Right lobe of liver (tissue), 6 donors: ENCODE measurements at regions of chr22 and their contacts with region 1.

Region 1: DNA sequence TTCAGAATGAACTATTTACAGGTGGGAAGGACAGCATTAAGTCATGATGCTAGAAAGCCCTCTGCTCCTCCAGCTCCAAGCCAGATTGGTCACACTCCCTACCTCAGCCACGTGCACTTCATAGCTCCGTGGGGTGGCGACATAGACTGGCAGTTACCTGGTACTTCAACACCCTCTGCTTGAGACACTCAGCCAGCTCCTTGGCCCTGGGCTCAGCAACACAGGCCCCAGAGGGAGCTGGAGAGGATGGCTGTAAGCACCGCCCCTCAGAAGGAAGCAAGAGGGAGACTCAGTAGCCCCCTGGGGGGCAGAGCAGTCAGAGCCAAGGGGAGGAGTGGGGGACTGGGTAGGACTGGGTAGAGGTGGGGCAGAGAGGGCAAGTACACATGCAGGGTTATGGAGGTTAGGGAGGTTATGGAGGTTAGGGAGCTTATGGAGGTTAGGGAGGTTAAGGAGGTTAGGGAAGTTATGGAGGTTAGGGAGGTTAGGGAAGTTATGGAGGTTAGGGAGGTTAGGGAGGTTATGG is 102.1 kb upstream of the BID start:
- DNase-seq: no peak
- ATAC-seq: peak; percentile 32 to 41 (median 36)
- H3K4me3 ChIP-seq: no peak overlapping the region
- H3K27ac ChIP-seq: no peak overlapping the region
- H3K4me1 ChIP-seq: peaks cover 0 to 7% (median 0%) of the 10 kb centered on the region in 4 donors
- H3K27me3 ChIP-seq: no peaks in the 10 kb centered on the region
- CTCF ChIP-seq: no peak
- POLR2A ChIP-seq: no peak

Region 2: DNA sequence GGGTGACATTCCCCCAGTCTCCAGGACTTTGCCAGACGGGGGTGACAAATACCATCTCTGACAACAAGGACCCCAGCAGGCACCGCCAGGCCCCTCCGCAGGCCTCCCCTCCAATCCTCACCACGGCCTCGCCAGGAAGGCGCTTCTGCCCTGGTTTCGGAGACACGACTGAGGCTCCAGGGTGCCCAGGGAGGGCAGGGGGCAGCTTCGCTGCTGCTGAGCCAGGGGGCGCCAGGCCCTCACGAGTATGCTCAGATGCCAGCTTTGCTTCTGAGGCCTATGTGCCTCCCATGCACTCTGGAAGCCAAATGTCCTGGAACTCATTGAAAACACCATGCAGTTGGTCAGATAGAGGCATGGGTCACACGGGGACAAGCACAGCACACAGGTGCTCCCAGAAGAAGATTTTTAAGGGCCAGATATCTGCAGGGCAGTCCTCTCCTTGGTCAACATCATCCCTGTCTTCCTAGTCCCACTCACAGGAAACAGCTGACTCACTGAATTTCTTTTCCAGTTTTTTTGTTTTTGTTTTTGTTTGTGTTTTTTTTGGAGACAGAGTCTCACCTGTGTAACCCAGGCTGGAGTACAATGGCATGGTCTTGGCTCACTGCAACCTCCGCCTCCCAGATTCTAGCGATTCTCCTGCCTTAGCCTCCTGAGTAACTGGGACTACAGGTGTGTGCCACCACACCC is 122.0 kb before region 1 on chr22:
- intact Hi-C with region 1: no loop called
- DNase-seq: peak in 1 of 3 donors; percentile 39
- ATAC-seq: peak; percentile 71 to 83 (median 76)
- H3K4me3 ChIP-seq: no peak overlapping the region
- H3K27ac ChIP-seq: peak overlapping the region in 1 of 3 donors; percentile 37
- H3K4me1 ChIP-seq: peaks cover 0 to 13% (median 2%) of the 10 kb centered on the region in 4 donors
- H3K27me3 ChIP-seq: no peaks in the 10 kb centered on the region
- CTCF ChIP-seq: peak; percentile 31 to 58 (median 44)
- POLR2A ChIP-seq: no peak

Region 3: GRCh38 chr22:17773606-17774205 is 102.7 kb before region 1 on chr22:
- intact Hi-C with region 1: no loop called
- DNase-seq: peak; percentile 69 to 80 (median 71)
- ATAC-seq: peak; percentile 7 to 38 (median 23)
- H3K4me3 ChIP-seq: peak overlapping the region; percentile 61 to 83 (median 64)
- H3K27ac ChIP-seq: peak overlapping the region; percentile 82 to 96 (median 87)
- H3K4me1 ChIP-seq: peaks cover 0 to 33% (median 12%) of the 10 kb centered on the region in 4 donors
- H3K27me3 ChIP-seq: no peaks in the 10 kb centered on the region
- CTCF ChIP-seq: no peak
- POLR2A ChIP-seq: no peak

Region 4: DNA sequence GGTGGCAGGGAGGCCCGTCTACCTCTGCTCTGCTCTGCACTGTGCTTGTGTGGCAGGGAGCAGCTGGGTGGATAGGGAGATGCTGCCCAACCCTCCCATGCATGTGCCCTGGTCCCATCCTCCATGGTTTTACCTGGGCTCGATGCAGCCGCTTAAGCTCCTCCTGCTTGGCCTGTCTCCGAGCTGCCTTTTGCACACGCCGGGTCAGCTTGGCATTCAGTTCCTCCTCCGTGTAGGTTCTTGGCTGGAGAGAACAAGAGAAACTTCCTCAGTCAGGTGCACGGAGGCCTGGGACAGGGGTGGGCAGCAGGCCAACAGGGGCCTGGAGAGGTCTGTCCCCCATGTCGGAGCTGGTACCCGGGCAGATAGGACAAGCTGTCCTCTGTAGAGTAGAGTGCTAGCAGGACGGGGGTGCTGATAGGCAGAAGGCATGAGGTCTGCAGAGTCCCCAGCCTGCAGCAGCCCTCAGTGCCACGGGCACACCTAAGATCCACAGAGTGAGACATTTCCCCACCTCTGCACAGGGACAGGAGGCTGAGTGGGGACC is 65.7 kb before region 1 on chr22:
- intact Hi-C with region 1: loop called in 1 of 2 experiments (anchors 10 kb)
- DNase-seq: no peak
- ATAC-seq: no peak
- H3K4me3 ChIP-seq: no peak overlapping the region
- H3K27ac ChIP-seq: no peak overlapping the region
- H3K4me1 ChIP-seq: peaks cover 0 to 23% (median 7%) of the 10 kb centered on the region in 4 donors
- H3K27me3 ChIP-seq: no peaks in the 10 kb centered on the region
- CTCF ChIP-seq: no peak
- POLR2A ChIP-seq: no peak

Region 5: GRCh38 chr22:17972385-17973181 is 96.2 kb after region 1 on chr22:
- intact Hi-C with region 1: no loop called
- DNase-seq: peak in 2 of 3 donors; percentile 54 to 68
- ATAC-seq: peak; percentile 82 to 90 (median 84)
- H3K4me3 ChIP-seq: peak overlapping the region in 2 of 3 donors; percentile 0 to 31
- H3K27ac ChIP-seq: peak overlapping the region; percentile 32 to 80 (median 60)
- H3K4me1 ChIP-seq: peaks cover 0 to 35% (median 20%) of the 10 kb centered on the region in 4 donors
- H3K27me3 ChIP-seq: no peaks in the 10 kb centered on the region
- CTCF ChIP-seq: no peak
- POLR2A ChIP-seq: no peak